ENCODE measurements at regions of chr4 and their contacts with region 1.

Region 1: GRCh38 chr4:98260579-98261290 is 449 bp upstream of the RAP1GDS1 start:
- DNase-seq: peak; percentile 84 to 96 (median 92)
- H3K4me3 ChIP-seq: peak overlapping the region; percentile 67 to 96 (median 88)
- H3K27ac ChIP-seq: peak overlapping the region; percentile 89 to 99 (median 98)
- H3K27me3 ChIP-seq: no peaks in the 10 kb centered on the region
- CTCF ChIP-seq: peak in 12 of 56 donors; percentile 1 to 19 (median 10)

Region 2: GRCh38 chr4:98143001-98143899 is 117.5 kb before region 1 on chr4 and contains the start of gene STPG2:
- intact Hi-C with region 1: loop called (anchors 2 to 5 kb)
- DNase-seq: peak; percentile 77 to 96 (median 92)
- H3K4me3 ChIP-seq: peak within 1 kb of the TSS; percentile 57 to 95 (median 77)
- H3K27ac ChIP-seq: peak within 1 kb of the TSS; percentile 59 to 96 (median 90)
- H3K27me3 ChIP-seq: no peaks in the 10 kb centered on the region
- CTCF ChIP-seq: peak in 54 of 56 donors; percentile 12 to 66 (median 49)
- total RNA-seq, gene STPG2: 0.65 to 5.0 (median 2.1) TPM in 119 of 120 experiments, not detected in the other

Region 3: DNA sequence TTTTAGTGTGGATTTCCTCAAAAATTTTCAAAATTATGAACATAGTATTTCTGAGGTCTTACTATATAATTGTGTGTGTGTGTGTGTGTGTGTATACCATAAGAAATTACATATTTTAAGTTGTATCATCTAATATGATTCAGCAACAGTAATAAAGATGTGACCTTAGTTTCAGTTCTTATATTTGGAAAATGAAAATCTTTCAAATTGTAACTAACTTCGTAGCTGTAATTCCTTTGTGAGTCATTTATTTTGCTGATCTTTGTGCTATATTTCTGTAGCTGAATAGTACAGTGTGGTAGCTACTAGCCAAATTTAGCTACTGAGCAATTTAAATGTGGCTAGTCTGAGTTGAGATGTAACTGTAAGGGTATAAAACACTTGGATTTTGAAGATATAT is 116.8 kb after region 1 on chr4:
- intact Hi-C with region 1: loop called (anchors 10 kb)
- DNase-seq: no peak
- H3K4me3 ChIP-seq: no peak overlapping the region
- H3K27ac ChIP-seq: peak overlapping the region in 13 of 59 donors; percentile 11 to 79 (median 64)
- H3K27me3 ChIP-seq: no peaks in the 10 kb centered on the region
- CTCF ChIP-seq: no peak

Region 4: DNA sequence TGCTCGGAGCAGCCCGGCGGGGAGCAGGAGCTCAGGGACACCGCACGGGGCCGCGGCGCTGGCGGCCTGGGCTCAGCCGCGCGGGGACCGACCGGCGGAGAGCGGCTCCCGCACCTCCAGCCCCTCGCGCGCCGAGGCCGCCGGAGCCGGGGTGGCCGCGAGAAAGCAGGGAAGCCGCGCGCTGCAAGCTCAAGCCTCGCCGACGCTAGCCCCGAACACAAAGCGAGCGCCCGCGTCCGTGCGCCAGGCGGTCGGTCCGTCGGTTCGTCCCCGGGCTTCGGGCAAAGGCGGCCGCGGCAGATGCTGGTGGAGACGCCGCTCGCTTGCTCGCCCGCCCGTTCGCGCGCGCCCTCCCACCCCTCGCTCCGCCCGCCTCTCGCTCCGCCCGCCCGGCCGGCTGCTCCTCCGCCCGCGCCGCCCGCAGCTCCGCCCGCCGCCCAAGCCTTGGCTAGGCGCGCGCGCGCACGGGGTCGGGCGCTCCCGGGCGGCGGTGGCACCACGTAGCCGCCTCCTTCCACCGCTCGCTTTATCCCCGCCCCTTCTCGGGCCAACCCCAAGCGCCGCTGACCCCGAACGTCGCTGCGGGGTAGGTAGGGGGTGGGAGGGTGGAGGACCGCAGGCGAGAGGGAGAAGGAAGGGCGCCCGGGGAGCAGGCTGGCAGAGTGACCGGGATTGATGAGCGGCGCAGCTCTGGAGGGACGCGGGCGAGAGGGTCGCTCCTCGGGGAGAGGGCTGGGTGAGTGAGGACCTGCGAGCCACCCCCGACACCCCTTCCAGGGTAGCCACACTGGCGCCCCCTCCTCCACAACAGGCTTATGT is 397.8 kb after region 1 on chr4 and contains the start of gene TSPAN5:
- intact Hi-C with region 1: loop called (anchors 2 to 5 kb)
- DNase-seq: peak; percentile 56 to 90 (median 76)
- H3K4me3 ChIP-seq: peak within 1 kb of the TSS; percentile 59 to 96 (median 86)
- H3K27ac ChIP-seq: peak within 1 kb of the TSS; percentile 78 to 98 (median 94)
- H3K27me3 ChIP-seq: no peaks in the 10 kb centered on the region
- CTCF ChIP-seq: peak in 12 of 56 donors; percentile 3 to 35 (median 10)
- total RNA-seq, gene TSPAN5: 56.5 to 140 (median 109) TPM